Natural killer cell (primary cell): ENCODE measurements at regions of chr2 and their contacts with region 1.

Region 1: GRCh38 chr2:151688719-151689118 is 45.6 kb downstream of the NEB start:
- DNase-seq: no peak
- ATAC-seq: no peak
- H3K4me3 ChIP-seq: no peak overlapping the region
- H3K4me3 Mint-ChIP-seq: no peak overlapping the region
- H3K27ac ChIP-seq: no peak overlapping the region
- H3K27ac Mint-ChIP-seq: no peak overlapping the region
- H3K4me1 ChIP-seq: no peaks in the 10 kb centered on the region
- H3K4me1 Mint-ChIP-seq: peaks cover 4% of the 10 kb centered on the region in 2 donors
- H3K27me3 ChIP-seq: no peaks in the 10 kb centered on the region
- H3K27me3 Mint-ChIP-seq: no peaks in the 10 kb centered on the region
- CTCF ChIP-seq: no peak

Region 2: GRCh38 chr2:151728804-151729414 is 40.2 kb after region 1 on chr2:
- intact Hi-C with region 1: loop called (anchors 5 kb)
- DNase-seq: no peak
- ATAC-seq: no peak
- H3K4me3 ChIP-seq: no peak overlapping the region
- H3K4me3 Mint-ChIP-seq: no peak overlapping the region
- H3K27ac ChIP-seq: no peak overlapping the region
- H3K27ac Mint-ChIP-seq: no peak overlapping the region
- H3K4me1 ChIP-seq: no peaks in the 10 kb centered on the region
- H3K4me1 Mint-ChIP-seq: peaks cover 12 to 15% of the 10 kb centered on the region in 2 donors
- H3K27me3 ChIP-seq: no peaks in the 10 kb centered on the region
- H3K27me3 Mint-ChIP-seq: no peaks in the 10 kb centered on the region
- CTCF ChIP-seq: no peak